ENCODE measurements at regions of chr12 and their contacts with region 1.

Region 1: DNA sequence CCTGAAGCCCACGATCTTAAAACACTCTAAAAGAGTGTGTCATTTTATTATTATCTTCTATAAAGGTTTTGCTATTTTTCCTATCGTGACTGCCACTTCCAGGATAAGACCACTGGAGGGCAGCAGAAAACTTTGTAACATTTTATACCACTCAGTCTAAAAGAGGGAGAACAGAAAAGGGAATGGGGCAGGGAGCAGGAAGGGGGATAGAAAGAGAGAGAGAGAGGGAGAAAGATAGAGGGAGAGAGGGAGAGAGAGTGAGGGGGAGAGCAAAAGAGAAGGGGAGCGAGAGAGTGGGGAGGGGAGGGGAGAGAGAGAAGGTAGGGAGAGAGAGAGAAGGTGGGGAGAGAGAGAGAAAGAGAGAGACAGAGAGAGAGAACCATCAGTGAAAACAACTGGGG is 2.0 kb upstream of the ART4 start:
- DNase-seq: no peak
- ATAC-seq: peak; percentile 81
- H3K4me3 Mint-ChIP-seq: no peak overlapping the region
- H3K27ac Mint-ChIP-seq: peak overlapping the region; percentile 51
- H3K4me1 Mint-ChIP-seq: peaks cover 14% of the 10 kb centered on the region
- H3K27me3 Mint-ChIP-seq: no peaks in the 10 kb centered on the region
- CTCF ChIP-seq: peak; percentile 87

Region 2: GRCh38 chr12:14629832-14630710 is 215.3 kb before region 1 on chr12:
- CTCF ChIA-PET with region 1: no interaction called
- POLR2A ChIA-PET with region 1: no interaction called
- intact Hi-C with region 1: loop called (anchors 2 kb)
- DNase-seq: peak; percentile 31
- ATAC-seq: peak; percentile 100
- H3K4me3 Mint-ChIP-seq: no peak overlapping the region
- H3K27ac Mint-ChIP-seq: no peak overlapping the region
- H3K4me1 Mint-ChIP-seq: peaks cover 3% of the 10 kb centered on the region
- H3K27me3 Mint-ChIP-seq: no peaks in the 10 kb centered on the region
- CTCF ChIP-seq: peak; percentile 89

Region 3: DNA sequence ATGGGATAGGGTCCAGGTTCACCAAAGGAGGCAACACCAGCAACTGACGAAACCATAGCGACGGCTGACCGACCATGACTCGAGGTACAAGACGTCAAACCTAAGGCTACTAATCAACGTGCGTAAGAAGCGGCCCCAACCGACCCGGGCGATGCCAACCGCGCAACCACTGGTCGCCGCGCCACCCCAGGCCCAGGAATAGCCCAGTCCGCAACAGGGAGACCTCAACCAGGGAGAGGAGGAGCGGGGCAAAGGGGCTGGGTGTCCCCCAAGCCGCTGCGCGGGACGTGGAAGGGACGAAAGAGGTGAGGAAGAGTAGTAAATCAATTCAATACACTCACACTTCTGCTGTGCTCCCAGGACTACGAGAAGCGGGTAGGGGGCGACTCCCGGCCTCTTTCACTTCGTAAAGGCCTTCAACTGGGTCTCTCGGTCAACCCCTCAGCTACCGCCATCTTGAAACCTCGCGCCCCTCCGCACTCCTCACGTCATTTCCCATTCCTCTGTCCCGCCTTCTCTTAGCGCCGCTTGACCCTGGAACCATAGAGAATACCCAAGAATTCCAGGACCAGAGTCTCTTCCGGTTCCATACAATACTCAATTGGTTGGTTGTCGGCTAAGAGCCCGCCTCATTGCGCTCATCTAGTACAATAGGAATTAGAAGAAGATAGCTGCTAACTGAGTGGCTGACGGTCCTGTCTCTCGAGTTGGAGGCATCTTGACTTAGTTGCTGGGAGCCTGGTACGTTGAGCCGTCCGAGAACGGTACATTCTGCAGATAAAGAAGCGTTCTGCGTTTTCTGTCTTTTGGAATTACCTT is 42.1 kb before region 1 on chr12 and contains the starts of genes C12orf60 and WBP11:
- CTCF ChIA-PET with region 1: no interaction called
- POLR2A ChIA-PET with region 1: no interaction called
- intact Hi-C with region 1: loop called (anchors 2 kb)
- DNase-seq: peak; percentile 74
- ATAC-seq: peak; percentile 95
- H3K4me3 Mint-ChIP-seq: no peak within 1 kb of the TSS
- H3K27ac Mint-ChIP-seq: no peak within 1 kb of the TSS
- H3K4me1 Mint-ChIP-seq: peaks cover 17% of the 10 kb centered on the region
- H3K27me3 Mint-ChIP-seq: no peaks in the 10 kb centered on the region
- CTCF ChIP-seq: no peak
- total RNA-seq, gene C12orf60: 0.64 and 0.69 TPM in 2 replicates
- total RNA-seq, gene WBP11: 86.3 and 89.4 TPM in 2 replicates

Region 4: DNA sequence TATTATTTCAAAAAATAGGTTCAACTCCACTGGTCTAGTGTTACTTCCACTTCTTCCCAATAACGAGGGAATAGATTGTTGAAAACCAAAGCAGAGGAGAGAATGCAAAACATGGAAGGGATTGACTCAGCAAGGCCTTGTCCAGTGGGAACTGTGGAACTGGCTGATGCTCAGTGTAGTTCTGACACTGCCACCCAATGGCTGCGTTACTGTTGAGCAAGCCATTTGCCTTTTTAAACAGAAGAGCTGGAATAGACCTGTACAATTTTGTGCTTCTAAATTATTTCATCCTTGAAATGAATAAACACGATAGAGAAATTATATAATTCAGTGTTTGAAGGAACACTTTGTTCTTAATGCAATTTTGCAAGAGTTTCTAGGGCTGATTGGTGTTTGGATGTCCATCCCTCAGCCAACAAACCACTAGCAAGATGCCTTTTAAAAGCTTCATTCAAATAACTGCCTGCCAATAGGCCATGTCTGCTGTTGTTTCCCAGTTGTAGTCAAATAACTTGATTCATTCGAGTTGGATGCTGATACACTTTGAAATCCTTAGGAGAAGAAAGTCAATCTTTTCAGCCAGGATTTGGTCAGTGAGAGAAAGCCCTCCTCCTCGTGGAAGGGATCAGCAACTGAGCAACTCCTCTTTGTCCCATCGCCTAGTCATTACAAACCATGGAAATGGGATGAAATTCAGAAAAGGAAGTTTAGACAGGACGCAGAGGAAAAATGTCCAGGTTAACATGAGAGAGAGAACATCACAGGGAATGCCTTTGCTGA is 47.6 kb after region 1 on chr12:
- CTCF ChIA-PET with region 1: no interaction called
- POLR2A ChIA-PET with region 1: no interaction called
- intact Hi-C with region 1: loop called (anchors 2 kb)
- DNase-seq: no peak
- ATAC-seq: no peak
- H3K4me3 Mint-ChIP-seq: no peak overlapping the region
- H3K27ac Mint-ChIP-seq: no peak overlapping the region
- H3K4me1 Mint-ChIP-seq: no peaks in the 10 kb centered on the region
- H3K27me3 Mint-ChIP-seq: peaks cover 6% of the 10 kb centered on the region
- CTCF ChIP-seq: no peak

Region 5: DNA sequence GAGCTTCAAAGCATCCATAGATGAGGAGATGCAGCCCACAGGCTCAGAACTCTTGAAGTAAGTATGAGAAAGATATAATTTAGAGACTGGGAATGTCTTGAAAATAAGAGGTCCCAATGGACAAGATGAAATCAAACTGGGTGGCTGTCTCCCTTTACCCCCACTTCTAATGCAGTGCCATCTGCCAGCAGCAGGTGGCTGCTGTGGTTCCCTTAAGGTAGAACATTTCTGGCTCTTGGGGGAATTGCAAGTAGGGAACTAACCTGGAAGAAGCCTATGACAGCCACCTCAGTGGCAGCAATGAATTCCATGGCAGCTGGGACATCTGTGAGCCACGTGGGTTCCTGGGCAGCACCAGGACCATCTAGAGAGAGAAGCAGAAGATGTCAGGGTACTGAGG is 92.3 kb after region 1 on chr12:
- CTCF ChIA-PET with region 1: interaction called, 3 read pairs
- POLR2A ChIA-PET with region 1: no interaction called
- intact Hi-C with region 1: loop called (anchors 1 kb)
- DNase-seq: no peak
- ATAC-seq: peak; percentile 41
- H3K4me3 Mint-ChIP-seq: no peak overlapping the region
- H3K27ac Mint-ChIP-seq: peak overlapping the region; percentile 91
- H3K4me1 Mint-ChIP-seq: peaks cover 37% of the 10 kb centered on the region
- H3K27me3 Mint-ChIP-seq: no peaks in the 10 kb centered on the region
- CTCF ChIP-seq: no peak

Region 6: GRCh38 chr12:15268927-15269552 is 423.7 kb after region 1 on chr12:
- CTCF ChIA-PET with region 1: interaction called, 3 read pairs
- POLR2A ChIA-PET with region 1: no interaction called
- intact Hi-C with region 1: loop called (anchors 1 kb)
- DNase-seq: no peak
- ATAC-seq: peak; percentile 62
- H3K4me3 Mint-ChIP-seq: no peak overlapping the region
- H3K27ac Mint-ChIP-seq: no peak overlapping the region
- H3K4me1 Mint-ChIP-seq: no peaks in the 10 kb centered on the region
- H3K27me3 Mint-ChIP-seq: peaks cover 5% of the 10 kb centered on the region
- CTCF ChIP-seq: peak; percentile 76

Measured in activated B cell treated with CpG ODN at 0.5 μM for 24 hours (primary cell).